Activated CD4-positive, alpha-beta T cell treated with anti-CD3 and anti-CD28 coated beads, Interleukin-2, amount 10 ng/mL, durations not matched to agents 24 days and 14 days (primary cell): ENCODE measurements at regions of chr4 and their contacts with region 1.

Region 1: GRCh38 chr4:152369902-152370295 is 166.0 kb downstream of the FBXW7 start:
- DNase-seq: no peak
- H3K4me3 Mint-ChIP-seq: no peak overlapping the region
- H3K27ac Mint-ChIP-seq: no peak overlapping the region
- H3K4me1 Mint-ChIP-seq: peaks cover 9% of the 10 kb centered on the region
- H3K27me3 Mint-ChIP-seq: no peaks in the 10 kb centered on the region

Region 2: GRCh38 chr4:151887031-151887815 is 482.7 kb before region 1 on chr4:
- intact Hi-C with region 1: loop called (anchors 10 kb)
- DNase-seq: no peak
- H3K4me3 Mint-ChIP-seq: no peak overlapping the region
- H3K27ac Mint-ChIP-seq: peak overlapping the region; percentile 57
- H3K4me1 Mint-ChIP-seq: peaks cover 28% of the 10 kb centered on the region
- H3K27me3 Mint-ChIP-seq: no peaks in the 10 kb centered on the region

Region 3: GRCh38 chr4:152352622-152353116 is 17.2 kb before region 1 on chr4:
- intact Hi-C with region 1: no loop called
- DNase-seq: no peak
- H3K4me3 Mint-ChIP-seq: no peak overlapping the region
- H3K27ac Mint-ChIP-seq: no peak overlapping the region
- H3K4me1 Mint-ChIP-seq: peaks cover 11% of the 10 kb centered on the region
- H3K27me3 Mint-ChIP-seq: no peaks in the 10 kb centered on the region